GM10248 (cell line): ENCODE measurements at regions of chr1 and their contacts with region 1.

Region 1: GRCh38 chr1:153510984-153511410 is 24.8 kb downstream of the S100A6 start:
- DNase-seq: peak; percentile 89
- CTCF ChIP-seq: peak; percentile 92

Region 2: DNA sequence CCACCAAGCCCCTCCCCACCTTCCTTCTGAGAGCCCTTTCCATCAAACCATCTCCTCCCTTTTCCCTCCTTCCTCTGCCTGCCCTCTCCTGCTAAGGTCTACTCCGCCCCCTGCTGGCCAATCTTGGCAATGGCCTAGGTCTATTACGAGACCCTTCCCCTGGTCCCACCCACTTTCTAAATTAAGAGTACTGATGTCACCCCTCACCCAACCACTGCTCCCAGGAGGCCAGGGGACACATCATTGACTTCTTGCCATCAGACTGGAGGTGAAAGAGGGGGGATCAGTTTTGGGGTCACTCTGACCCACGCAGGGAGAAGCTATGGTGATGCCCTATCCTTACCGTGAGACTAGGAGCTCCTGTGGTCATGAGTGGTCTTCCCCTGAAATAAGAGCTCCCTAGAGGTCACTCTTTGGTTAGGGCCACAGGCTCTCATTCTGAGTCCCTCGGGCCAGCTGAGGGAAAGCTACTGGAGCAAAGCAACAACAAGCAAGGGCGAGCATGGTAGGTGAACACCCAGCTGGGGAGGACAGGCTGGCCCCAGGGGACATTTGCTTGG is 15.9 kb before region 1 on chr1:
- CTCF ChIA-PET with region 1: interaction called, 61 read pairs
- POLR2A ChIA-PET with region 1: no interaction called
- DNase-seq: peak; percentile 65
- CTCF ChIP-seq: peak; percentile 86

Region 3: GRCh38 chr1:153532769-153533599 is 22.0 kb after region 1 on chr1:
- CTCF ChIA-PET with region 1: interaction called, 28 read pairs
- POLR2A ChIA-PET with region 1: no interaction called
- DNase-seq: peak; percentile 83
- CTCF ChIP-seq: peak; percentile 87

Region 4: DNA sequence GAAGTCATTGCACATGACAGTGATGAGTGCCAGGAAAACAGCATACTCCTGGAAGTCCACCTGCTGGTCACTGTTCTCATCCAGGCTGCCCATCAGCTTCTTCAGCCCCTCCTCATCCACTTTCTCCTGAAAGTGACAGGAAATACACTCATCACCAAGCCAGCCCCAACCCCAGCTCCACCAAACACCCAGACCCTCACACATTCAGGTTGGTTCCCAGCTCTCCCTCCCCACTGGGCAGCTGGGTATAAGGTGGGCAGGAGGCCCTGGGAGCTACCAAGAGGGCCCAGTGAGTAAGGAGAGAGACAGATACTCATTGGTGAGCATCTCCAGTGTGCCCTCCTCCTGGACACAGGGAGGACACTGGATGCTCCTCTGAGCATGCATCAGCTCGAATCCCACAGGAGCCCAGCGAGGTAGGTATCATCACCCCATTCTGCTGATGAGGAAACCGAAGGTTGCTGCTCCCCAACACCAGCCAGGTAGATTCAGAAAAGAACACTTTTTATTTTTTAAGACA is 50.5 kb after region 1 on chr1:
- CTCF ChIA-PET with region 1: interaction called, 19 read pairs
- POLR2A ChIA-PET with region 1: no interaction called
- DNase-seq: no peak
- CTCF ChIP-seq: no peak

Region 5: DNA sequence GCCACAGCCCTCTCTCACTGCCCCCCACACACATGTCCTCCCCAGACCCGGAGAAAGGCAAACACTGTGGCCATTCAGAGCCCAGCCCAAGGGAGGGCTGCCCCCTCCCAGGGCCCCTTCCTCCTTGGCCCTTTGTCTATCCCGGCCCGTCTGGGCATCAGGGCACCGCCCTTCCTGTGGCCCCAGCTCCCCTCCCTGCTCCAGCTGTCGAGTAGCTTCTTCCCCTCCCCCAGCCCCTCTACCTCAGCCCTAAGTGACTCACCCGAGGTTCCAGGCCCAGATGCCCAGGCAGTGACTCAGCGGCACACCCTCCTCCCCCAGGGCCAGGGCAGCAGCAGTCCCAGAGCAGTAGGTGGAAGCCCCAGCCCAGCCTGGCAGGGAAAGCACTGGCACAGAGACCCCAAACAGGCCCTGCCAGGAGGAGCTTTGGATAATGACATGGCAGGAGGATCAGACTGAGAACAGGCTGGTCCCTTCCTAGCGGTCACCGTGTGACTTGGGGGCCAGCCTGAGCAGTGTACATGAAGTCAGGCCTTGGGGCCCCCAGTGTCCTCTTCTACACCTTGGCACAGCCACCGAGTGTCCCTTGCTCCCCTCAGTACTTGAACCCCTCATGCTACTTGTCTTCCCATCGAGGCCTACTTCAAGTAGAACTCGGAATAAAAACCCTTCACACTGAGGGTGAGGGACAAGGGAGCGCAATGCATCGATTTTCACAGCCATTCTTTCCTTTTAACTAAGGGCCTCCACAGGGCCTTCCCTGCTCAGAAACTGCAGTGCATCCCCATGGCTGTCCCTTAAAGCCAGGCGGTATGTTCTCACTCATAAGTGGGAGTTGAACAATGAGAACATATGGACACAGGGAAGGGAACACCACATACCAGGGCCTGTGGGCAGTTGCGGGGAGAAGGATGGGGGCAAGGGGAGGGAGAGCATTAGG is 55.7 kb after region 1 on chr1:
- CTCF ChIA-PET with region 1: interaction called, 109 read pairs
- POLR2A ChIA-PET with region 1: no interaction called
- DNase-seq: peak; percentile 63
- CTCF ChIP-seq: no peak

Region 6: GRCh38 chr1:153617675-153618074 is 106.7 kb after region 1 on chr1:
- CTCF ChIA-PET with region 1: interaction called, 26 read pairs
- POLR2A ChIA-PET with region 1: no interaction called
- DNase-seq: peak; percentile 34
- CTCF ChIP-seq: peak; percentile 83

Region 7: DNA sequence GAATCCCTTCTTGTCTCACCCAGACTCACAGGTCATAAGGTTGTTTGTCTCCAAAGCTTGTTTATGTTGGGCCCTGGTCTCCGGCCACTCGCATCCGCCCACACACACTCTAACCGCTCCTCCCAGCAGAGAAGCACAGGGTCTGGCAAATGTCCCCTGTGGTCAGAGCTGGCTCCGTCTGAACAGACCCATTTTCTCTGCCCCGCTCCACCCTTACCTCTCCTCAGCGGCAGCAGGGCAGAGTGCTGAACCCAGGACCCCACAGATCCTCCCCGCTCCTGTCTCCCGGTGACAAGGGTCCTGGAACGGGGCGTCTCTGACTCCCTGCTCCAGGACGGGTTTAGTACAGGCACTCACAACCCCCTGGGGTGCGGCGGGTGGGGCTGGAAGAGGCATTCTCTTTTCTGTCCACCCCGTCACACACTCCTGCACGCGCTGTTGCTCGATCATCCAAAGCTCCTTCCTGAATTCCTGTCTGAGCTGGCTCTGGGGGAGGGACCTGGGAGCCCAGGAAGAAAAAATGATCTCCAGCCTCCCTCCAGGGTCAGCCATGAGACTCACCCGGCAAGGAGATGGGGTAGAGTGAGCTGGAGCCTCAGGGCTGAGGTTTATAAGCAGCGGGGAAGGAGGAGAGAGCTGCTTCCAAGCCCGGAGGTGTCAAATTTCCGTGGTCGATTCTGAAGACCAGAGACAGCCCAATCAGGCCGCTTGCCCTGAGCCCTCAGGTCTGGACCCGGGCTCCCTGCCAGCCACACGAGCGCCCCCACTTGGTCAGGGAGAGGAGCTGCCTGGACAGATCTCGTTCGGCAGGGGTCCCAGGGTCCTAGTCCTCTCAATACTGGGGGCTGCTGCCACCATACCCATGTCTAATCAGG is 116.2 kb after region 1 on chr1 and contains the start of gene S100A13:
- CTCF ChIA-PET with region 1: interaction called, 26 read pairs
- POLR2A ChIA-PET with region 1: interaction called, 3 read pairs
- DNase-seq: peak; percentile 69
- CTCF ChIP-seq: peak; percentile 66

Region 8: DNA sequence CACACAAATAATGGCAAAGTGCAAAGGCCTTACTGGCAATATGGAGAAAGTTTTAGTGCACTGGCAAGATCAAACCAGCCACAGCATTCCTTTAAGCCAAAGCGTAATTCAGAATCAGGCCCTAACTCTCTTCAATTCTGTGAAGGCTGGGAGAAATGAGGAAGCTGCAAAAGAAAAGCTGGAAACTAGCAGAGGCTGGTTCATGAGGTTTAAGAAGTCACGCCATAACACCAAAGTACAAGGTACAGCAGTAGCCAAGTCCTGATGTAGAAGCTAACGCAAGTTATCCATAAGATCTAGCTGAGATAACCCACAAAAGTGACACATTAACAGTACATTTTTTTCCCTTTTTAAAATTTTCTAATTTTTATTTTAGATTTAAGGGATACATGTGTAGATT is 321.3 kb after region 1 on chr1:
- CTCF ChIA-PET with region 1: no interaction called
- POLR2A ChIA-PET with region 1: no interaction called
- DNase-seq: no peak
- CTCF ChIP-seq: no peak